Right ventricle myocardium inferior (tissue), 1 donor: ENCODE measurements at regions of chr2 and their contacts with region 1.

Region 1: GRCh38 chr2:219571311-219572236 is at the start of gene OBSL1:
- DNase-seq: peak; percentile 85
- ATAC-seq: peak; percentile 88
- total RNA-seq, gene OBSL1: 158 TPM

Region 2: GRCh38 chr2:219278655-219279516 is 292.7 kb before region 1 on chr2 and contains the start of gene DNAJB2:
- intact Hi-C with region 1: no loop called
- DNase-seq: peak; percentile 100
- ATAC-seq: peak; percentile 97
- total RNA-seq, gene DNAJB2: 80.4 TPM

Region 3: GRCh38 chr2:219597552-219598307 is 26.2 kb after region 1 on chr2 and contains the start of gene STK11IP:
- intact Hi-C with region 1: loop called (anchors 2 kb)
- DNase-seq: peak; percentile 98
- ATAC-seq: peak; percentile 97
- total RNA-seq, gene STK11IP: 13.9 TPM

Region 4: DNA sequence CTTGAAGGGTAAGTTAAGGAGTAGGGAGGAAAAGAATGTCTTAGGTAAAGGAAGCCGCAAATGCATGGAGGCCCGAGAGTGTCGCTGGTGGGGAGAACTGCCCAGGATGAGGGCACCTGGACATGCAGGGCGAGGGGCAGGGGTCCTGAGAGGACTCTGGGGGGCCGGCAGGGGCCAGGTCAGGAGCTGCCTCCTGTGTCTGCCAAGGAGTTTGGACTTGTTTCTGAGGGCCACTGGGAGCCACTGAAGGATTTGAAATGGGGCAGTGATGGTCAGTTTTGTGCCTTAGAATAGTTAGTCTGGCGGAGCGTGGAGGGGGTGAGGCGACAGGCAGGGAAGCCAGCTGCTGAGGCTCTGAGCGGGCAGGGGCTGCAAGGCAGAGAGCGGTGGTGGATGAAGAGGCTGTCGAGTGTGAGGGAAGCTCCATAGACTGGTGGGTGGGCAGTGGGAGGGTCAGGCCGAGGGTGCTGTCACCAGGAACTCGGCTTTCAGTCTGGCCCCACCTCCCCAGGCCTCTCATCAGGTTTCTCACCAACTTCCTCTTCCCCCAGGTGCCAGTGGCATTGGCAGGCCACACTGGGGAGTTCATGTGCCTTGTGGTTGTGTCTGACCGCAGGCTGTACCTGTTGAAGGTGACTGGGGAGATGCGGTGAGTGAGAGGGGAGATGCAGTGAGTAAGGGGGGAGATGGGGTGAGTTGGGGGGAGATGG is 41.2 kb after region 1 on chr2:
- intact Hi-C with region 1: loop called (anchors 5 kb)
- DNase-seq: peak; percentile 56
- ATAC-seq: no peak

Region 5: GRCh38 chr2:219627103-219628100 is 55.8 kb after region 1 on chr2 and contains the start of gene SLC4A3:
- intact Hi-C with region 1: loop called (anchors 5 kb)
- DNase-seq: no peak
- ATAC-seq: peak; percentile 24
- total RNA-seq, gene SLC4A3: 445 TPM